Lower leg skin (tissue), 4 donors: ENCODE measurements at regions of chr6 and their contacts with region 1.

Region 1: DNA sequence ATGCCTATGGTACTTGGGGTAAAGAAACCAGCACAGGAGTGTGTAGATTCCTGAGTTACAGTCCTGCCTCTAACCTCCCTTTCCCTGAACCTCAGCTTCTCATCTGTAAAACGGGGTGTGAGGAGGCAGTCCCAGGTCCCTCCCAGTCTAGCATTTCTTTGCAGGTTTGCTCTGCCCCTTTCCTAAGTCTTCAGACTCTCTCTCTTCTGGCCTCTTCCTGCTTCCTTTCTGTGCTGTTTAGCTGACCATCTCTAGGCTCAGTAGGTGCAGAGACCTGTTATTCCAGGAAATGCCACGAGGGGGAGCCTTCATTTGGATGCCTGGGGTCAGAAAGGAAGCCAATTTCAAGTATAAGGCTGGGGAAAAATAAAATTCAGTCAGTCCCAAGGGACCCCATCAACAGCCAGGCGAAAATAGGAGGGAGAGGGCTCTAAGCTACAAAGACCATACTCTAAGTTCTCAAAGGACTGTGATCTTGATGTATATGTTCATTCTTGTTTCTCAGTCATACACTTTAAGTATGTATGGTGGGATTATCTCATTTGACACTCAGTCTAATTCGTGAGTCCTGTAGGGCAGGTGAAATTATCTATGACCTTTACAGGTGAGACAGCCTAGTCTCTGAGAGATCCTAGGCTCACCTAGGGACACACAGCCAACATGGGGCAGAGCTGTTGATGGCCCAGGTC is 89.1 kb downstream of the NCR2 start:
- DNase-seq: peak; percentile 85 to 97
- H3K4me3 ChIP-seq: no peak overlapping the region
- CTCF ChIP-seq: peak in 1 of 3 donors; percentile 68
- POLR2A ChIP-seq: no peak

Region 2: GRCh38 chr6:41392246-41392645 is 32.3 kb before region 1 on chr6:
- intact Hi-C with region 1: no loop called
- DNase-seq: peak in 1 of 2 donors; percentile 20
- H3K4me3 ChIP-seq: no peak overlapping the region
- CTCF ChIP-seq: no peak
- POLR2A ChIP-seq: no peak

Region 3: DNA sequence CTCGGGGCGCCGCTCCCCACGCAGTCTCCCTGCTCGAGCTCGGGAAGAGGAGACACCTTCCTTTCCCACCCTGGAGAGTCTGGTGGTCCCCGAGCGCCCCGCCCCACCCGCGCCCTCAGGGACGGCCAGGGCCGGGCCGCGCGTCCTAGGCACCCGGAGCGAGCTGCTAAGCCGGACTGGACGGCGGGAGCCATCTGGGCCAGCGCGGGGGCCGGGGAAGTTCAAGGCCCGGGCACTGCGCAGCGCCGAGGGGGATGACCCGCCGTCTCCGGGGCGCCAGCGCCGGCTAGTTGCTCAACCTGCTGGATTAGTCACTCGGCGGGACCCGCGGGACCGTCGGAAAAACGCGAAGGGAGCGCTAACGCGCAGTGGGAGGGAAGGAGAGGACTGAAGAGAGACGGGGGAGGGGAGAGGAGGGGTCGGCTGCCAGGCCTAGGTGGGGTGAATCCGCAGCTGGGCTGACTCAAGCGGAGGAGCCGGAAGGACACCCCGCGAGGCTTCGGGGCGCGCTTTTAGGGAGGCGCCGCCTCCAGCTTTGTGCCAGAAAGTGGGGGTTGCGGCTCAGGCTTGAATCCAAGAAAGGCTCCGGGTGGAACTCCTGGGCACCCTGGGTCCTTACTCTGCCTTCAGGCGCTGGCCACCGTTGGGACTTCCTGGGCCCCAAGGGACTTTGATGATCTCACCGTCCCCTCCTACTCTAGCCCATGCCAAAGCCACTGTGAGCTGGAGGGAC is 46.0 kb after region 1 on chr6:
- intact Hi-C with region 1: no loop called
- DNase-seq: peak in 1 of 2 donors; percentile 92
- H3K4me3 ChIP-seq: no peak overlapping the region
- CTCF ChIP-seq: no peak
- POLR2A ChIP-seq: no peak

Region 4: GRCh38 chr6:41591859-41592502 is 167.5 kb after region 1 on chr6:
- intact Hi-C with region 1: loop called (anchors 5 kb)
- DNase-seq: peak; percentile 77 to 94
- H3K4me3 ChIP-seq: no peak overlapping the region
- CTCF ChIP-seq: no peak
- POLR2A ChIP-seq: no peak

Region 5: DNA sequence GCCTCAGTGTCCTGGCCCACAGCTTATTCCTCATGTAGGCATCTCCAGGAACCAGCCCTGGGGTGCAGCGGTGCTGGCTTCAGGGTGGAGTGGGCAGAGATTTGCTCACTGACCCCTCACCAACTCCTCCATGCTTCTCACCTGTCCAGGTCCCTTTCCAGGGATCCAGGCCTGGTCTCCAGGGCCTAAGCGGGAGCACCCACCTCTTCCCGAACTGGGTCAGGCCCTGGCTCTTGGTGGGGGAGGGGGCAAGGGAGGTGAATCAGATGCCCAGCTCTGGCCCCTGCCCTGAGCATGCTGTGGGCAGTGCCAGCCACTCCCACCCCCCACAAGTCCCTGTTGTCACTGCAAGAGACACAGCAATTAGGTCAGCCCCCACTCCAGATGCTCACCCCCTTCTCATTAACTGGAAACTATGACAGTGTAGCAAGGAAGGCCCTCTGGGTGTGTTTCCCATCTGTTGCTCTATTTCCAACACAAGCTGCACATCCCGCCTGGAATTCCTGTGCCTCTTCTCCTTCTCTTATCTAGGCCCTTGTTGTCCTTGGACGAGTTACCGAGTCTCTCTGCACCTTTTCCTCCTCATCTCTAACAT is 250.8 kb after region 1 on chr6:
- intact Hi-C with region 1: loop called (anchors 10 kb)
- DNase-seq: no peak
- H3K4me3 ChIP-seq: no peak overlapping the region
- CTCF ChIP-seq: no peak
- POLR2A ChIP-seq: no peak

Region 6: DNA sequence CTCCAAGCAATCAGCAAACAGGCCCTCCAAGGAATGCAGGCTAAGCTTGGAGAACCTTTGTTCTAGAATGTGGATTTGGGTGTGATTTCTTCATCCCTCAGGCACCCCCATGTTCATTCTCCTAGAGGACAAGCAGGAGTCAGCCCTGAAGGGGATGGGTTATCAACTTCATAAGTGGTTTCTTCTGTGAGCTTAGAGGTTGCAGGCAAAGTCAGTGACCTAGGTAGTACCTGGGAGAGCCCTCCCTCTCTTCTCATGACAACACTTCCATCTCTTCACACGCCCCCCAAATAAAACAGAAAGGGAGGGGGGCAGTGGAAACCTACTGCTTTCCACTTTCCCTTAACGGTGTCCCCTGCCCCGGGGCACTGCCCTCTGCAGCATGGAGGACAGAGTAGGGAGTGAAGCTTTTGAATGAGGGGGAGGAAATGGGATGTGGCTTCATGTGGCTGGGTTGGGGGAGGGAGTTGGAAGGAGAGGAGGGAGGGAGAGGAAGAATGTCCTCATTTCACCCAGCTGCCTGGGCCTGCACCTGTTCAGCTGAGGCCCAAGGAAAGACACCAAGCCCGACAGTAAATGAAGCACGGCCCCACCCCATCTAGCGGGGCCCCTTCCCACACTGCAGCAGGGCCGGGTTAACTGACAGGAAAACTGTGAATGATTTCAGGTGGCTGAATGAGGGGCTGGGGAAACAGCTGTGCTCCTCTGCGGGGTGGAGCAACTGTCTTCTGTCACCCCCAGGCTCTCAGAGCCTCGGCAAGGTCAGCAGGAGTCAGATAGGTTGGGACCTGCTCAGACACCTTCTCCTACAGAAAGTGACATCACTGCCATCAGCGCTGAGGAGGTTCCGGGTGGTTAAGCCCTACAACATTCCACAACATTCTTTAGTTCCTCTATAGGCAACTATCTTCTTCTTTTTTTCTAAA is 585.7 kb after region 1 on chr6:
- intact Hi-C with region 1: no loop called
- DNase-seq: peak in 1 of 2 donors; percentile 67
- H3K4me3 ChIP-seq: no peak overlapping the region
- CTCF ChIP-seq: no peak
- POLR2A ChIP-seq: no peak